ENCODE measurements at regions of chr11 and their contacts with region 1.

Region 1: GRCh38 chr11:95699631-95700470 is 89.7 kb downstream of the FAM76B start:
- DNase-seq: no peak
- H3K4me3 Mint-ChIP-seq: peak overlapping the region; percentile 65
- H3K27ac Mint-ChIP-seq: peak overlapping the region; percentile 85
- H3K4me1 Mint-ChIP-seq: peaks cover 56% of the 10 kb centered on the region
- H3K27me3 Mint-ChIP-seq: no peaks in the 10 kb centered on the region

Region 2: DNA sequence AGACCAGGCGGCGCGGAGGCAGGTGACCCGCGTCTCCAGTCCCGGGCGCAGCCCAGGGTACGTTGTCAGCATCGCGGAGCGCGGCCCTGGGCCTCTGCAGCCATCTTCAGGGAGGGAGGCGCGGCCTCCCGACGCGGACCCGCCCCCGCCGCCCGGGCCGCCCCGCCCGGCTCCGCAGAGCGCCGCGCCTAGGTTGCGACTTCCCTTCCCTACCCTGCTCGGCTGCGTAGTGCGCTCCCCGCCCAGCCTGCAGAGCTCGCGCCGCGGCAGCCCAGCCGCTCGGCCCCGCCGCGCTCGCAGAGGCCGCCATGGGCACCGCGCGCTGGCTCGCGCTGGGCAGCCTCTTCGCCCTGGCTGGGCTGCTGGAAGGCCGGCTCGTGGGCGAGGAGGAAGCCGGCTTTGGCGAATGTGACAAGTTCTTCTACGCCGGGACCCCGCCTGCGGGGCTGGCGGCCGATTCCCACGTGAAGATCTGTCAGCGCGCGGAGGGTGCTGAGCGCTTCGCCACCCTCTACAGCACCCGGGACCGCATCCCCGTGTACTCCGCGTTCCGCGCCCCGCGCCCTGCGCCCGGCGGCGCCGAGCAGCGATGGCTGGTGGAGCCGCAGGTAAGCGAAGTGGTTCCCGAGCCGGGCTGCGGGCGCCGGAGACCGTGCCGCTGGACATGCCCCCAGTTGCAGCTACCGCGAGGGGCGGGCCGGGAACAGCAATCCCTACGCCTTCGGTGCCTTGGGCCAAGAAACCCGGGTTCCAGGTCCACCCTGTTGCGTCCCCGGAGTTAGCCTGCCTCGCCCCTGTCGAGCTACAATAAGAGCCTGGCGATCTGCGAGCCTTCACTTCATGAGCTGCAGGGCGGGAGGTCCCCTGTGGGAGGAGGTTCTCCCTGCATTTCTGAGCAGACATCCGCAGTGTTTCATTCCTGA is 610.0 kb before region 1 on chr11 and contains the start of gene ENDOD1:
- CTCF ChIA-PET with region 1: interaction called, 5 read pairs
- POLR2A ChIA-PET with region 1: no interaction called
- intact Hi-C with region 1: loop called (anchors 5 kb)
- DNase-seq: peak; percentile 90
- H3K4me3 Mint-ChIP-seq: peak within 1 kb of the TSS; percentile 87
- H3K27ac Mint-ChIP-seq: peak within 1 kb of the TSS; percentile 92
- H3K4me1 Mint-ChIP-seq: peaks cover 68% of the 10 kb centered on the region
- H3K27me3 Mint-ChIP-seq: no peaks in the 10 kb centered on the region
- total RNA-seq, gene ENDOD1: 25.9 TPM

Region 3: DNA sequence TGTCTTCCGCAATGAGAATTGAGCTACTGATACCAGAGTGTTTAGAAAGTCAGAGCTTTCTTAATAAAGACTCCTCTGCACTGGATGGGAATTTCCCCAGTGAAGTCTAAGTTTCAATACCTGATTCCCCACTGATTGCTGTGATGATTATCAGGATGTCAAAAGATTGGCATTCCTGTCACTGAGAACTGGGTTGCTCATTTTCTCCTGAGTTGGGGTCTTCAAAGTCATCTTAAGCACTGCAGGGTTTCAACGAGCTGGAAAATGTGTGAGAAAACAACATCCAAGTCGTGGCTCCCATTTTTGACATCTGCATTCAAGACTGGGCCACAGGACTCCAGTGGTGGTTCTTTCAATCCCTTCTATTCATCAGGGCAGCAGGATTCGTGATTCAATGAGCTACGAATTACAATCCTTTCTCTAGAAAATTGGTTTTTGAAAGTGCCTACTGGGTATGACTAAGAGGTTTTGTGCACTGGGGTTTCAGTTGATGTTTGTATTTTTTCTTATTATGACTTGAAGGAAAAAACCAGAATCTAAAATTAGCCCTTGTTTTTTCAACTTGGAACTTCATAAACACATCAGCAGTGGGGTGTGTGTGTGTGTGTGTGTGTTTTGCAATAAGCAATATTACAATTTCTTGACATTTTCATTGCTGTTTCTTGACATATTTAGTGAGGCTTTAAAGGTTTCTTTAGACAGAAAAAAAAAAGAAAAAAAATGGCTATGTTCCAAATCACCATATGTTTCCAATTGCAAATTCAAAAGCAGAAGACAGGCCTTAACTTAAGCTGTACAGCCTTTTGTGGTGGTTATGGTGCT is 143.3 kb before region 1 on chr11:
- CTCF ChIA-PET with region 1: interaction called, 23 read pairs
- POLR2A ChIA-PET with region 1: interaction called, 11 read pairs
- intact Hi-C with region 1: loop called (anchors 1 kb)
- DNase-seq: peak; percentile 56
- H3K4me3 Mint-ChIP-seq: peak overlapping the region; percentile 38
- H3K27ac Mint-ChIP-seq: peak overlapping the region; percentile 90
- H3K4me1 Mint-ChIP-seq: peaks cover 27% of the 10 kb centered on the region
- H3K27me3 Mint-ChIP-seq: no peaks in the 10 kb centered on the region

Region 4: DNA sequence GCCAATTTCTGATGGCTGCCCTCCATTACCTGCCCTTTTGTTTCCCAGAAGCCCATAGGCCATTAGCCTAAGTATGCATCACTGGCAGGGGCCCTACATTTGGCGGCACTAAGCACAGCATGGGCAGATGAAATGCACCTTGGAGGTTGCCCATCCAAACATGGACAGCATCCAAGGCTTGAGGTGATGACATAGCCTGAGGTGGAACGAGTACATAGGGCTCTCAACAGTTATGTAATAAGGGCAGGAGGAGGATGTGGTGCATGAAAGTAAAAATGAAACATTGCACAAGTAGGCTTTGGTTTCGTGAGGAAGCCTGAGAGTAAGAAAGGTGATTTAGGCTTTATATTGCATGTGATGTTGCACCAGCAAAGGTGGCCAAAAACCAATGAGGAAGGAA is 58.4 kb before region 1 on chr11:
- CTCF ChIA-PET with region 1: no interaction called
- POLR2A ChIA-PET with region 1: no interaction called
- intact Hi-C with region 1: loop called (anchors 5 kb)
- DNase-seq: peak; percentile 35
- H3K4me3 Mint-ChIP-seq: peak overlapping the region; percentile 32
- H3K27ac Mint-ChIP-seq: peak overlapping the region; percentile 4
- H3K4me1 Mint-ChIP-seq: peaks cover 14% of the 10 kb centered on the region
- H3K27me3 Mint-ChIP-seq: no peaks in the 10 kb centered on the region

Region 5: GRCh38 chr11:95674657-95675358 is 25.0 kb before region 1 on chr11:
- CTCF ChIA-PET with region 1: interaction called, 6 read pairs
- POLR2A ChIA-PET with region 1: interaction called, 3 read pairs
- intact Hi-C with region 1: loop called (anchors 1 kb)
- DNase-seq: peak; percentile 70
- H3K4me3 Mint-ChIP-seq: peak overlapping the region; percentile 13
- H3K27ac Mint-ChIP-seq: peak overlapping the region; percentile 31
- H3K4me1 Mint-ChIP-seq: peaks cover 51% of the 10 kb centered on the region
- H3K27me3 Mint-ChIP-seq: no peaks in the 10 kb centered on the region

Region 6: GRCh38 chr11:95688580-95689189 is 11.2 kb before region 1 on chr11:
- CTCF ChIA-PET with region 1: interaction called, 24 read pairs
- POLR2A ChIA-PET with region 1: interaction called, 4 read pairs
- intact Hi-C with region 1: loop called (anchors 1 kb)
- DNase-seq: no peak
- H3K4me3 Mint-ChIP-seq: no peak overlapping the region
- H3K27ac Mint-ChIP-seq: no peak overlapping the region
- H3K4me1 Mint-ChIP-seq: peaks cover 40% of the 10 kb centered on the region
- H3K27me3 Mint-ChIP-seq: no peaks in the 10 kb centered on the region

Region 7: DNA sequence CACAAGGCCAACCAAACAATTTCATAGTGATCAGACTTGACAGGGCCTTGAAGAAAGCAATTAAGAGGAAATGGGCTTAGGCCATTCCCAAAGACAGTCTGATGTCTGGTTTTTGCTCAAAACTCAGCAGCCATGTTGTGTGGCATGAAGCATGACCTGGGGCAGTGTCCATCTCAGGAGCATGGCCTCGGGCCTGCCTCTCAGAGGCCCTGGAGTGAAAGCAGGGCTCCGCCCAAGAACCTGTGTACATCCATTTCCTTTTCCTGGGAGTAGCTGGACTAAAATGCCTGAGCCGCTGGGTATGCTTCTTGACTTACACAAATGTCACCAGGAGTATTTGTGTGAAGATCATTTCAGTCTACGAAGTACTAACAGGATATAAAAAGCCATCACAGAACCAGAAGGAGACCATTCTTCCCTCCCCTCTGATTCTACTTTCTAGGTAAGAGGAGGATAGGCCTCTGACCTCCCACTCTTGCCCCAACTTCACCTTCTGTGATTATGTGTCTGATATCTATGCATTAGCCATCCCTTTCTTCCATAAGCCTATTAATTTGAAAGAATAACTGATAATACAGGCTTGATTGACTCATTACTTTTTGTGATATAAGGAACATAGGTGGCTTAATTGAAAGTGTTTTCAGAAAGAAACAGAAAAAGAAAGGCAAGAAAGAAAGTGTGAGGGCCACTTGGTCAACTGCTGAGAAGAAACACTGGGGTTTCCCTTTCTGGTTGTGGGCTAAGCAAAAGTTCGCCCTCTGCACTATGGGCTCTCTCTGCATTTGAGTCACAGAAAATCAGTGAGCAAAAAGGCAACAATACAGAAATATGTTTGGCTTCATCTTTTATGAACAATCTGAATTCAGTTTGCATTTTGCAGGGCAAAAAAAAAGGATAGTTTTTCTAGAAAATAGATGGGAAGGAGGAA is 412.6 kb after region 1 on chr11:
- CTCF ChIA-PET with region 1: no interaction called
- POLR2A ChIA-PET with region 1: no interaction called
- intact Hi-C with region 1: no loop called
- DNase-seq: peak; percentile 57
- H3K4me3 Mint-ChIP-seq: no peak overlapping the region
- H3K27ac Mint-ChIP-seq: peak overlapping the region; percentile 5
- H3K4me1 Mint-ChIP-seq: peaks cover 45% of the 10 kb centered on the region
- H3K27me3 Mint-ChIP-seq: no peaks in the 10 kb centered on the region